GM10248 (cell line): ENCODE measurements at regions of chr1 and their contacts with region 1.

Region 1: GRCh38 chr1:101520302-101520701 is 283.5 kb downstream of the S1PR1 start:
- DNase-seq: peak; percentile 32
- CTCF ChIP-seq: peak; percentile 81

Region 2: GRCh38 chr1:100972185-100972584 is 548.1 kb before region 1 on chr1:
- CTCF ChIA-PET with region 1: no interaction called
- POLR2A ChIA-PET with region 1: no interaction called
- DNase-seq: no peak
- CTCF ChIP-seq: no peak

Region 3: GRCh38 chr1:101540161-101540560 is 19.9 kb after region 1 on chr1:
- CTCF ChIA-PET with region 1: interaction called, 11 read pairs
- POLR2A ChIA-PET with region 1: no interaction called
- DNase-seq: no peak
- CTCF ChIP-seq: no peak

Region 4: GRCh38 chr1:101567582-101568189 is 47.4 kb after region 1 on chr1:
- CTCF ChIA-PET with region 1: interaction called, 22 read pairs
- POLR2A ChIA-PET with region 1: no interaction called
- DNase-seq: peak; percentile 25
- CTCF ChIP-seq: peak; percentile 90

Region 5: DNA sequence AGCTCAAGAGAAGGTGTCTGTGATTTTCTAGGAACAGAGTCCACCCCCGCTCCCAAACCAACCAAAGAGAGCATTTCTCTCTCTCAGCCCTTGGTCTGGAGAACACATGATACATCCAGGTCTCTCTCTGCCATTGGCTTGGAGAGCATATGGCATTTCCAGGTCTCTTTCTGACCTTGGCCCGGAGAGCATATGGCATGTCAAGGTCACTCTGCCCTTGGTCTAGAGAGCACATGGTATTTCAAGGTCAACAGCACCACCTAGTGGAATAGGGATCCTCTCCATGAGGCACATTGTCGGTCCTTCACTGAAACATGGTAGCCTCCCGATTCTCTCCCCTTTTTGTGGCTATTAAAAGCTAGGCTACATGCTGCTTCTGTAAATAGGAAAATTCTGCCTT is 914.1 kb after region 1 on chr1:
- CTCF ChIA-PET with region 1: interaction called, 12 read pairs
- POLR2A ChIA-PET with region 1: no interaction called
- DNase-seq: no peak
- CTCF ChIP-seq: peak; percentile 55

Region 6: GRCh38 chr1:102531036-102531435 is 1010.7 kb after region 1 on chr1:
- CTCF ChIA-PET with region 1: no interaction called
- POLR2A ChIA-PET with region 1: no interaction called
- DNase-seq: no peak
- CTCF ChIP-seq: no peak